ENCODE measurements at regions of chr20 and their contacts with region 1.

Region 1: DNA sequence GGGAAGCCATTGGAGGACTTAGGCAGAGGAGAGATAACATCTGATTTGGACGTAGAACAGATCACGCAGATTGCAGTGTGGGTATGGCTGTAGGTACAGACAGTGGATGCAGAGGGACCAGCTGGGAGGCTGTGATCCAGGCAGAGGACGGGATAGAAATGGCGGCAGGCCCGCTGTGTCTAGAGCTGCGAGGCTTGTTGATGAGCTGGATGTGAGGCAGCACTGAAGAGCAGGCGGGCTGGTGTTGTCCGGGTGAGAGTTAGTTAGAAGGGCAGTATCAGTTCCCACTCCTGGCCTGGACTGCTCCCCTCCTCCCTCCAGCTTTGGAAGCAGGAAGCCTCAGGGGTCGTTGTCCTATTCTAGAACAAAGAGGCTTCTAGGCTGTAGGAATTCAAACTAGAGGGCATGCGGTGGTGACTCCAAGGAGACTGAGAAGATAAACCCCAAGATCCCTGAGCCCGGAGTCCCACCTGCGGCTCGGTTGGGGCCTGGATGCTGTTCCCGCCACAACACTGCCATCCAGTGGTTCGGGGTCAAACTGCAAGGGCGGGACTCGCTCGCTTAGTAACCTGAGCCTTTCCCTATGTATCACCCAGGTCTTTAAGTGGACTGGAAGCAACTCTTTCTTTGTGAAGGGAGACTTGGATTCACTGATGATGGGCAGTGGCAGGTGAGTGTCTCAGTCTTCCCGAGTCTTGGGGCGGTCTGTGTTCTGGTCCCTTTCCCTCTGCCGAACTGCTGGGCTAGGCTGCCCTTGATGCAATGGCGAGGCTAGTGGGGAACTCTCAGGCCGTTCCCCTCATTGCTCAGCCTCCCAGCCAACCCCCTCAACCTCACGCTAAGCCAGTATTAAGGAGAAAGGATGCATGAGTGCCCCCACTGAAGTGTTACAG is 11.2 kb downstream of the TLDC2 start:
- DNase-seq: peak; percentile 87
- H3K4me3 ChIP-seq: no peak overlapping the region; a peak in 1 of 4 replicates
- H3K27ac ChIP-seq: no peak overlapping the region
- H3K4me1 ChIP-seq: peaks cover 0 to 7% of the 10 kb centered on the region in 2 experiments; a peak in 2 of 4 replicates
- H3K27me3 ChIP-seq: no peaks in the 10 kb centered on the region
- CTCF ChIP-seq: peak; percentile 91
- EP300 ChIP-seq: no peak
- RAD21 ChIP-seq: peak; percentile 96

Region 2: DNA sequence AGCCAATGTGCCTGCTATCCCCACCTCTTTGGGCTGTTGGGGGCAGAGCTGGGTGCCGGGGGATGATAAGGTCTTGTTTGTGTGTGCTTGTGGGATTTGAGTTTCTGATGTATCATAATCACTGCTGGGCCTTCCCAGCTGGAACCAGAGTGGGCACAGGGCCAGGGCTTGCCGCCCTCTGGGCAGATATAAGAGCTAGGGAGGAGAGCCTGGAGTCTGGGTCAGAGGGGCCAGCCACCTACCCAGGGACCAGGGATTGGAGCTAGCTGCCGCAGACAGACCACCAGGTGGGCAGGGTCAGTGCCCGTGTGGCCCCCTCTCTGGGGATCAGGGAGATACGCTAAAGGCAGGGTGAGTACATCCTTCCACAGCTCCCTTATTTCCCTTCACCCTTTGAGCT is 14.3 kb before region 1 on chr20:
- CTCF ChIA-PET with region 1: interaction called, 26 read pairs
- POLR2A ChIA-PET with region 1: no interaction called
- DNase-seq: peak; percentile 84
- H3K4me3 ChIP-seq: no peak overlapping the region
- H3K27ac ChIP-seq: no peak overlapping the region; a peak in 1 of 4 replicates
- H3K4me1 ChIP-seq: peaks cover 0 to 8% of the 10 kb centered on the region in 2 experiments; a peak in 1 of 4 replicates
- H3K27me3 ChIP-seq: no peaks in the 10 kb centered on the region
- CTCF ChIP-seq: no peak
- EP300 ChIP-seq: no peak
- RAD21 ChIP-seq: no peak

Region 3: DNA sequence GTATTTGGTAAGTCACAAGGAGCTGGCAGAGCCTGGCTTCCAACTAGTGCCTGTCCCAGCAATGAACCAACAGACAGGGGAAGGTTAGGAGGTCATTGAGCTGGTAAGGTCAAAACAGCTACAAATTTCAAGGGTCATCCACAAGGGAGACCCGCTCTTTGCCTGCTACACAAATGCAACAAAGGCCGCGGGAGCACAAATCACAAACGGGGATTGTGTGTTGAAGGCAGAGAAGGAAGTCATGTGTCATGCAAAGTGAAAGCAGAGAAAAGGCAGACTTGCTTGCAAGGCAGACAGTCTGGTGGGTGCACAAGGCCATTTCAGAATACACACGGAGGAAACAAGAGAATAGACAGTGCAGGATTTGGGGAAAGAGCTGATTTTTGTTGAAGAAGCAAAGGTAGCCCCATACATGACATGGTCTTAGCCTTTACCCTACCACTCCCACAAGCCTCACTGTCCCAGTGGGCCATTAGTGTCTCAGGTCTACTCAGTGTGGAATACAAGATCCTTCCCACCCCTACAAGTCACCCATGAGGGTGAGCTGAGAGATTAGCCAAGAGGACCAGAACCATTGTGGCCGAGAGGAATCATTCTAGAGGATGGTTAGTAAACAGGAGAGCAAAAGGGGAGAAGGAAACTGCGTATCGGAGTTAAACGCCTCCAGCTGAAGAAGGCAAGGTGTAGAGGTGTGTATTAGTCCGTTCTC is 82.5 kb after region 1 on chr20:
- CTCF ChIA-PET with region 1: no interaction called
- POLR2A ChIA-PET with region 1: no interaction called
- DNase-seq: no peak
- H3K4me3 ChIP-seq: no peak overlapping the region
- H3K27ac ChIP-seq: no peak overlapping the region
- H3K4me1 ChIP-seq: no peaks in the 10 kb centered on the region
- H3K27me3 ChIP-seq: no peaks in the 10 kb centered on the region
- CTCF ChIP-seq: no peak
- EP300 ChIP-seq: no peak
- RAD21 ChIP-seq: no peak

Region 4: DNA sequence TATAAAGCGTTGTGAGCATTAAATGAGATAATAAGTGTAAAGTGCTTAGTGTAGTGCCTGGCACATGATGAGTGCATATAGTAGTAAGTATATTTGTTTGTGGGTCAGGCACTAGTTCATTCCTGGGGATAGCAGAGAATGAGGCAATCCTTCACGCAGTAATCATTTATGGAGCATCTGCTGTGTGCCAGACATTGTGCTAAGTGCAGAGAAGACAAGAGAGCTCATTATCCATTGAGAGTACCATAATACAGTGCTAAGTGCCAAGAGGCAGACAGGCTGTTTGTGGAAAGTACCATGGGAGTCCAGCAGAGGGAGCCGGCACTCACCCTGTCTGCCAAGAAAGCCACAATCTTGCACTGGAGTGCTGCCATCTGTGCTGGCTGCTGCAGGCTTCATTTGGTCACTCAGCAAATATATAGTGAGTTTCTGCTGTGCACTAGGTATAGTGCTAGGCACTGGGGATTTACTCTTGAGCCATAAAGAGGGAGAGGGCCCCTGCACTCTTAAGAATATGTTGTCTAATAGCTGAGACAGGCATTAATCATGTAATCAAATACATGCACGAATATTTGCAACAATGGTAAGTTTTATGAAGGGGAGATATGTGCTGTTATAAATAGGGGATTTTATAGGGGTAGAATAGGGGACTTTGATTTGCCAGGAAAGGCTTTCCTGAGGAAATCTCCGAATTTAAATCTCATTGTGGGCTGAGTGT is 305.2 kb after region 1 on chr20:
- CTCF ChIA-PET with region 1: no interaction called
- POLR2A ChIA-PET with region 1: no interaction called
- DNase-seq: peak; percentile 78
- H3K4me3 ChIP-seq: no peak overlapping the region
- H3K27ac ChIP-seq: no peak overlapping the region
- H3K4me1 ChIP-seq: peaks cover 4 to 5% of the 10 kb centered on the region in 2 experiments; a peak in 2 of 4 replicates
- H3K27me3 ChIP-seq: no peaks in the 10 kb centered on the region
- CTCF ChIP-seq: peak; percentile 85
- EP300 ChIP-seq: no peak
- RAD21 ChIP-seq: peak; percentile 71